ENCODE measurements at regions of chr19 and their contacts with region 1.

Region 1: GRCh38 chr19:11505032-11505503 is 571 bp downstream of the ZNF653 start:
- DNase-seq: peak; percentile 93
- H3K4me3 ChIP-seq: peak overlapping the region; percentile 52 to 77 (median 73)
- H3K27ac ChIP-seq: peak overlapping the region; percentile 82
- H3K4me1 ChIP-seq: peaks cover 13% of the 10 kb centered on the region
- H3K27me3 ChIP-seq: no peaks in the 10 kb centered on the region
- CTCF ChIP-seq: no peak

Region 2: GRCh38 chr19:11528551-11529341 is 23.7 kb after region 1 on chr19 and contains the start of gene ECSIT:
- CTCF ChIA-PET with region 1: no interaction called
- dilution Hi-C with region 1: no loop called
- in situ Hi-C with region 1: no loop called
- intact Hi-C with region 1: loop called (anchors 1 kb)
- DNase-seq: peak; percentile 99
- H3K4me3 ChIP-seq: peak within 1 kb of the TSS; percentile 83 to 93 (median 91)
- H3K27ac ChIP-seq: peak within 1 kb of the TSS; percentile 62
- H3K4me1 ChIP-seq: peaks cover 24% of the 10 kb centered on the region
- H3K27me3 ChIP-seq: no peaks in the 10 kb centered on the region
- CTCF ChIP-seq: peak in 1 of 2 donors; percentile 7
- total RNA-seq, gene ECSIT: 13.7 to 16.8 TPM

Region 3: GRCh38 chr19:11570039-11570462 is 65.0 kb after region 1 on chr19:
- CTCF ChIA-PET with region 1: no interaction called
- dilution Hi-C with region 1: loop called (anchors 5 kb)
- in situ Hi-C with region 1: no loop called
- intact Hi-C with region 1: no loop called
- DNase-seq: no peak
- H3K4me3 ChIP-seq: no peak overlapping the region
- H3K27ac ChIP-seq: no peak overlapping the region
- H3K4me1 ChIP-seq: no peaks in the 10 kb centered on the region
- H3K27me3 ChIP-seq: no peaks in the 10 kb centered on the region
- CTCF ChIP-seq: no peak